ENCODE measurements at regions of chr5 and their contacts with region 1.

Region 1: DNA sequence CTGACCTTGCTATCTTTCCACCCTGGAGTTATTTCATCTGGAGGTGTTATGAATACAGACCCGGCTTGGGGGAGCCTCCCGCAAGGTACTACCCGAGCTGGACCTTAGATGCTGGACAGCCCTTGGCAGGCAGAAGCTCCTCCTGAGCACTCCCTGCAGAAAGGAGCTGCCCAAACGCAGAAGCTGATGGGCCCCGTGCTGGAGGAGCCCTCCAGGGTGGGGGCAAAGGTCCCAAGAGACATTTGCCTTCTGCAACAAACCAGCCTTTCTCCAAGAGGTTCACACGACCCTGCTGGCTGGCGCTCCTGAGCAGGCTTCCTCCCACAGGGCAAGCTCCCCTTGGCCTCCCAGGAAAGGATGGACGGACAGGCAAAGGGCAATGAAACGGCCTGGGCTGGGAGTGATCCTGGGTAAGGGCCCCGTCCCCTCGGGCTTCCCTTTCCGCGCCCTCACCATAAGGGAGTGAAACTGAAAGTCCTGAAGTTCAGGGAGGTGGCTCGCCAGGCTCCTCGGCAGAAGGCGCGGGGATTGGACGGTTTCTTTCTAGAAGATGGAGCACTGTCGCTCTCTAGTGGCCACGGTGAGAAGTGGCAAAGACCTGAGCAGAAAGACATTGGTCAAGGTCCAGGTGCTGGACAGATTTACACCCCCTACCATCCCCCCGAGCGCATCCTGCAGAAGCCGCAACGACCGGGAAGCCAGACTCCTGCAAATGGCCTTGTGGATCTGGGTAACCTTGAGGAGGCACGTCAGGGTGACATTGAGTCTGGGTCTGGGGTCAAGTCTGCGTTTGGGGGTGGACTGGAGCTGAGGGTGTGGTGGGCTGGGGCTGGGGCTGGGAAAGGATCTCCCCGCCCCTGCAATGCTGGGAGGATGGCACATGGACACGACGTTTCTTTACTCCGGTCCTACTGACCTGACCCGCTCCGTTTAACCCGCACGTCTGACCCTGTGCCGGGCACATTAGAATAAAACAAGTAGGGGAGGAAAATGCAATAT is 56.4 kb downstream of the NEURL1B start:
- DNase-seq: peak; percentile 85 to 92
- ATAC-seq: peak; percentile 58 to 86 (median 76)
- H3K4me3 ChIP-seq: peak overlapping the region; percentile 23 to 63 (median 58)
- H3K27ac ChIP-seq: peak overlapping the region; percentile 78 to 92 (median 86)
- H3K4me1 ChIP-seq: peaks cover 20 to 77% (median 60%) of the 10 kb centered on the region in 9 donors
- H3K27me3 ChIP-seq: peaks cover 0 to 5% (median 0%) of the 10 kb centered on the region in 7 donors
- CTCF ChIP-seq: peak; percentile 90 to 94 (median 92)

Region 2: DNA sequence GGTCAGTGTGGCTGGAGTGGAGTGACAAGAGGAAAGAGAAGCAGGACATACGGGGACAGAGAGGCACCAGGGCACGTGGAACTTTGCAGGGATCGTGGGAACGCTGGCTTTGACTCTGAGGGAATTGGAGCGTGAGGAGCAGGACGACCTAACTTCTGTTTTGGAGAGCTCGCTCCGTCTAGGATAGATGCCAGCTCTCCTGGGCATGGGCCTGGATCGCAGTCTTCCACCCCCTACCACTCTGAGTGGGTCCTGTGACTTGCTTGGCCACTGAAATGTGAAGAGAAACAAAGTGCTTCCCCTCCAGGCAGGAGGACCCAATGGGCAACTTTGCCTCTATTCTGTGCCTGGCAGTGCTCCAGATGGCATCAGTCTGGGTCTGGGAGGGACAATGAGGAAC is 234.4 kb before region 1 on chr5:
- intact Hi-C with region 1: loop called in 2 of 10 experiments (anchors 5 kb)
- DNase-seq: no peak
- ATAC-seq: peak in 1 of 8 donors; percentile 42
- H3K4me3 ChIP-seq: no peak overlapping the region
- H3K27ac ChIP-seq: no peak overlapping the region
- H3K4me1 ChIP-seq: peaks cover 0 to 37% (median 7%) of the 10 kb centered on the region in 9 donors
- H3K27me3 ChIP-seq: no peaks in the 10 kb centered on the region
- CTCF ChIP-seq: no peak

Region 3: DNA sequence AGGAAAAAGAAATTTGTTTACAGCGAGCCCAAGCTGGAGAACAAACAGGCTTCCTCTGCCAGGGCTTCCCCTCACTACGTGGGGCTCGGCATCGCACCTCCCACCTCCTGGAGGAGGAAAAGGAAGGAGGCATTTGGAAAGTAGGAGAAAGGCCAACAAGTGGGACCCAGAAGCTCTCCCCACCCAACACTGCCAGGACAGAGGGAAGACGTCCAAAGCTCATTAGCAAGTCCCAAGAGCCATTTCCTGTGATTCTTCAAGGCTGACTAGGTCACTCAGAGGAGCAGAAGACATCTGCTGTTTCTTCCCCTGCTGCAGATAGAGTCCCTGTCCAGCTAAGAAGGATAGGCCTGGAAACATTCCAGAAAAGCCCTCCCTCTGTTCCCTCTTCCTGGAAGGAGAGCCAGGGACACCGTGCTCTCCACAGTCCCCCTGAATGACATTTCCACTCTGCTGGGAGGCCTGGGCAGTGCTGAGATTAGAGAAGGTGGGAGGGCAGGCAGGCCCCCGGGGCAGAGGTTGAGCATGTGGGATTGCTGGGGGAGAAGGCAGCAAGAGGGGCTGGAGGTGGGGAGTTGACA is 113.4 kb before region 1 on chr5:
- intact Hi-C with region 1: loop called in 3 of 10 experiments (anchors 2 to 10 kb)
- DNase-seq: peak; percentile 72 to 85
- ATAC-seq: peak; percentile 70 to 91 (median 84)
- H3K4me3 ChIP-seq: no peak overlapping the region
- H3K27ac ChIP-seq: peak overlapping the region; percentile 81 to 96 (median 87)
- H3K4me1 ChIP-seq: peaks cover 24 to 86% (median 59%) of the 10 kb centered on the region in 9 donors
- H3K27me3 ChIP-seq: no peaks in the 10 kb centered on the region
- CTCF ChIP-seq: no peak

Region 4: GRCh38 chr5:172603251-172603806 is 94.1 kb before region 1 on chr5:
- intact Hi-C with region 1: loop called in 2 of 10 experiments (anchors 10 kb)
- DNase-seq: peak in 1 of 2 donors; percentile 70
- ATAC-seq: peak; percentile 27 to 68 (median 48)
- H3K4me3 ChIP-seq: peak overlapping the region in 1 of 10 donors; percentile 16
- H3K27ac ChIP-seq: peak overlapping the region; percentile 72 to 96 (median 88)
- H3K4me1 ChIP-seq: peaks cover 7 to 81% (median 37%) of the 10 kb centered on the region in 9 donors
- H3K27me3 ChIP-seq: no peaks in the 10 kb centered on the region
- CTCF ChIP-seq: no peak

Region 5: DNA sequence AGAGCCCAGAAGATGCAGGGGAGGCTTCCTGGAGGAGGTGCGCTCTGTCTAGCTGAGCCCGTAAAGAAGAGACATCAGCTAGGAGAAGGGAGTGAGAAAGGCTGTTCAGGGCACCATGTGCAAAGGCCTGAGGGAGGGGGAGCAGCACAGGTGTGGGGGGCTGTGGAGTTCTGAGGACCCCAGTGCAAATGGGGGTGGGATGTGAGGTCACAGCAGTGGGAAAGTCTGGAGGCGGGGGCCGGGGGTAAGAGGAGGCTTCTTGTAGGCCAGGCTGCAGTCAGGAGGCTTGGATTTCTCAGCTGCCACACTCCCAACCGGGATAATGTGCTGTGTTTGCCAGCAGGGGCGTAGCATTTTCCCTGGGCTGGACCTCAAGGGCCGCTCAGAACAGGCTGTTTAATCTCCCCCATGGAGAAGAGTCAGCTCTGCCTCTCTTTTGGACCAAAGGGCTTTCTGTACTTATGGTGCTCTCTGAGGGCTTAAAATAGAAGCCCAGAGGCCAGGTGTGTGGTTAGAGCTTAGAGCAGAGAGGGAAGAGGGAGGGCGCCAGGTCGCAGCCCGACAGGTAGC is 50.6 kb before region 1 on chr5:
- intact Hi-C with region 1: loop called in 8 of 10 experiments (anchors 2 to 10 kb)
- DNase-seq: peak in 1 of 2 donors; percentile 66
- ATAC-seq: peak; percentile 36 to 67 (median 60)
- H3K4me3 ChIP-seq: peak overlapping the region in 9 of 10 donors; percentile 16 to 99 (median 85)
- H3K27ac ChIP-seq: peak overlapping the region; percentile 23 to 99 (median 96)
- H3K4me1 ChIP-seq: peaks cover 9 to 98% (median 79%) of the 10 kb centered on the region in 9 donors
- H3K27me3 ChIP-seq: peaks cover 0 to 18% (median 0%) of the 10 kb centered on the region in 7 donors
- CTCF ChIP-seq: peak; percentile 21 to 59 (median 48)

Region 6: GRCh38 chr5:172667786-172668591 is 29.4 kb before region 1 on chr5:
- intact Hi-C with region 1: loop called in 3 of 10 experiments (anchors 2 to 5 kb)
- DNase-seq: no peak
- ATAC-seq: peak in 4 of 8 donors; percentile 7 to 25 (median 15)
- H3K4me3 ChIP-seq: no peak overlapping the region
- H3K27ac ChIP-seq: peak overlapping the region; percentile 9 to 92 (median 58)
- H3K4me1 ChIP-seq: peaks cover 24 to 96% (median 62%) of the 10 kb centered on the region in 9 donors
- H3K27me3 ChIP-seq: no peaks in the 10 kb centered on the region
- CTCF ChIP-seq: no peak